ENCODE measurements at regions of chr15 and their contacts with region 1.

Region 1: DNA sequence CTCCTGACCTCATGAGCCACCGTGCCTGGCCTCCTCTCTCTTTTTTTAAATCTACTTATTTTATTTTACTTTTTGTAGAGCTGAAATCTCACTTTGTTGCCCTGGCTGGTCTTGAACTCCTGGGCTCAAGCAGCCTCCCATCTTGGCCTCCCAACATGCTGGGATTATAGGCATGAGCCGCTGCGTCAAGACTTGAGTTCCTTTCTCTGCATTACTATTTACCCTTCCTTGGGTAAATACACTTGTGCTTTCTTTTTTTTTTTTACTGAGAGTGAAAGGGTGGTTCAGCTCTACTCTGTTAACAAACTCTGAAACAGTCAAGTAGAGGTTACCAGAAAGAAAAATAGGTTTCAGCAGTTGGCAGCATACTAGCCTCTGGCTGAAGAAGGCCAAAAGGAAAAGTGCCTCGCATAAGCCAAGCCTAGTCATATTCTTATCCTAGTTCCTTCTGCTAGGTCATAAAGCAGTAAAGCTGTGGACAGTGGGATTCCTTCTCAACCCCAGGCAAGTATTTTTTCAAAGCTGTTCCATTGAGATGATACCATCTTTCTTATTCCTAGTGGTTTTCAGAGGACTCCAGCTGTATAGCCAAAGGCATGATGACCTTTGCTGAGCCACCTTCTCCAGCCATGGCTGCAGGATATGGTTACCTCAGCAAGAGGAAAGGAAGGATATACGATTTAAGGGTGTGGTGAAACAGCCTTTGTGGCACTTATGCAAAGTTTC is 135.1 kb downstream of the RBPMS2 start:
- DNase-seq: peak; percentile 35
- ATAC-seq: no peak; the same call in 2 of the 3 replicates
- H3K4me3 ChIP-seq: 0 out of 6 replicates have a peak overlapping the region, but pooled peaks of 1 of the 3 experiments have one; percentile 1
- H3K27ac ChIP-seq: peak overlapping the region; percentile 68
- H3K4me1 ChIP-seq: peaks cover 83% of the 10 kb centered on the region
- H3K27me3 ChIP-seq: no peaks in the 10 kb centered on the region
- CTCF ChIP-seq: no peak
- EP300 ChIP-seq: peak in 1 of 2 experiments; percentile 28; a peak in 1 of 4 replicates
- POLR2A ChIP-seq: no peak
- RAD21 ChIP-seq: no peak

Region 2: DNA sequence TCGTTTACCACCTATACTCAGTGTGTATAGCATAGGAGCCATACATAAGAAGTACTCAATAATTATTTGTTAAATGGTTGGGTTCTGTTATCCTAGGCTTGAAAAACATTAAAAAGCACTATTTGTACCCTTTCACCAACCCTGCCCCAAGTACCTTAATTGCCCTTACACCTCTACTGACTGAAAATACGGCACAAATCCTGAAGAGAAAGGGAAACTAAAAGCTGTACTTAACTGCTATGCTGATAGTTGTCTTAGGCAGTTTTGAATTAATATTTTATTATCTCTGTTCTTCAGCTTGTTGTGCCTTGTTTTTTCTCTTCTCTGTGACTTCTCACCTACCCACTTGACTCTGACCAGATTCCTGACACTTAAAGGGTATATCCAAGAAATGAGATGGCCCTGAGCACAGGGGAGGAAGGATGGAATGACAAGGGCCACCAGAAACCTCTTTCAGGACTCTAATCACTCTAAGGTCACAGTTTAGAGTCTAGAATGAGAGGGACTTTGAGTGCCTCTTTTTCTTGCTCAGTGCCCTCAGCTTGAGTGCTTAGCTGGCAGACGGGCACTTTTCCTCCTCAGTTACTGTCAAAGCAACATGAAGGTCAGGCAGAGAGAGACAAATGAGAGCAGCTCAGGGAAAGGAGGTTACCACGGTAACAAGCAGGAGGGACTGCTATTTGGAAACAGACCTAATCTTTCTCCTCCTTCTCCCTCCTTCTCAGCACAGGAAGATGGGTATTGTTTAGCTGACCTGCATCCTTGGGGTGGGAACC is 43.4 kb before region 1 on chr15:
- CTCF ChIA-PET with region 1: no interaction called
- POLR2A ChIA-PET with region 1: no interaction called
- in situ Hi-C with region 1: no loop called
- intact Hi-C with region 1: loop called (anchors 10 kb)
- DNase-seq: no peak
- ATAC-seq: no peak
- H3K4me3 ChIP-seq: no peak overlapping the region
- H3K27ac ChIP-seq: no peak overlapping the region
- H3K4me1 ChIP-seq: peaks cover 19% of the 10 kb centered on the region
- H3K27me3 ChIP-seq: no peaks in the 10 kb centered on the region
- CTCF ChIP-seq: no peak
- EP300 ChIP-seq: no peak
- POLR2A ChIP-seq: no peak
- RAD21 ChIP-seq: no peak

Region 3: DNA sequence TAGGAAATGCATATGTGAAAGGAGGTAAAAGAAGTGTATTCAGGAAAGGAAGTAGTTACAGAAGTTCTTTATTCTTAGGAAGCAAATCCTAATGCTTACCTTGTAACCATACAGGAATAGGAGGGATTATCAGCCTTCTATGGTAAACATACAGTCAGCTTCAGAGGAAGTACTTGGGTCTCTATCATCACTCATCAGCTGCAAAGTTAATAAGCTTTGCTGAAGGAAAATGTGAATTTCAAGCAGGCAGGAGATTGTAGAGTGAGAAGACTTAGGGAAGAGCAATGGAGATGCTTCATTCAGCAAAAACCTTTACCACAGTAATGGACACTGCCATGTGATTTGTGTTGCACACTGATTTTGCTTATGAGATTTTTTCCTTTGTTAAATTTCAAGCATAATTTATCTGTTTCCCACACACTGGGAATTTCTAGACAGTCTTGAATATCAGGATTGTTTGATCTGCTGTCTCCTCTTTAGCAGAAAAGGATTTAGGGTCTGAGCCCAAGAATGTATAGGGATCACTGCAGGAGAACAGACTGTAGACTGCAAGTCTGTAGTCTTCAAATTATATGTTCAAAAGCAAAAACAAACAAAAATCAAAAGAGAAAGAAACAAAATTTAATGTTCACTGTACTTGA is 29.1 kb before region 1 on chr15:
- CTCF ChIA-PET with region 1: no interaction called
- POLR2A ChIA-PET with region 1: interaction called, 11 read pairs
- in situ Hi-C with region 1: no loop called
- intact Hi-C with region 1: no loop called
- DNase-seq: peak; percentile 48
- ATAC-seq: peak; percentile 71
- H3K4me3 ChIP-seq: peak overlapping the region in 2 of 3 experiments; percentile 13 to 17; a peak in 3 of 6 replicates
- H3K27ac ChIP-seq: peak overlapping the region; percentile 74
- H3K4me1 ChIP-seq: peaks cover 45% of the 10 kb centered on the region
- H3K27me3 ChIP-seq: no peaks in the 10 kb centered on the region
- CTCF ChIP-seq: no peak
- EP300 ChIP-seq: peak in 1 of 2 experiments; percentile 48; a peak in 1 of 4 replicates
- POLR2A ChIP-seq: no peak
- RAD21 ChIP-seq: no peak

Measured in HepG2 (cell line).